MCF 10A (cell line): ENCODE measurements at regions of chr1 and their contacts with region 1.

Region 1: DNA sequence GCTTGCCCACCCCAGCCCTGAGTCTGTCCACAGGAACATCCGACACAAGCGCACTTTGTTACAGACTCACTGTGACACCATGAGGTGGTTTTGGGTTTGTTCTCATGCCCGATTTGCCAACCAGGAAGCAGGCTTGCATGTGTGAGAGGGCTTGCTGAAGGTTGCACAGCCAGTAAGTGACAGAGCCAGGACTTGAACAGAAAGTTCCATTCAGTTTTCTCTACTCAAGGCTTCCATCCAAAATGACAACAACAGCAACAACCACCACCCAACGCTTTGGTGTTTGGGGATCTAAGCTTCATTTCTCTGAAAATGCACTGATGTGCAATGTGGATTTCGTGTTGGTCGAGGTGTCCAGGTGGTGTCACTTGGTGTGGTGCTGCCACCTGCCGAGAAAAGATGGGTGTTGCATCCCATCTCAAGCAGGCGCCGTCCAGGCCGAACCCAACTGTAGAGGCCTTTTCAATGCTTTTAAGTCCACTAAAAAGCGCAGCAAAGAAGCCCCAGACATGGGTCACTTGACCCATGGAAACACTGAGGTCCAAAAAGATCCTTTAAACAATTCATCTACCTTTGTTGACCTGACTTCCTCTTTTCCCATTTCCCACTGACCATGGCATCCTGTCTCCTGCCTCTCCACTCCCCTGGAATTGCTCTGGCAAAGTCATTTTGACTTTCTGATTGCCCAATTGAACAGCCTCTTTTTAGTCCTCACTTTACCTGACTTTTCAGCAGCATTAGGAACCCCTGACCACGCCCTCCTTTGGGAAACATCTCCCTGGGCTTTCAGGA is 12.2 kb downstream of the CITED4 start:
- DNase-seq: peak; percentile 75
- H3K4me3 Mint-ChIP-seq: no peak overlapping the region
- H3K27ac Mint-ChIP-seq: no peak overlapping the region
- H3K4me1 Mint-ChIP-seq: peaks cover 6% of the 10 kb centered on the region
- H3K27me3 Mint-ChIP-seq: no peaks in the 10 kb centered on the region
- CTCF ChIP-seq: peak; percentile 84

Region 2: DNA sequence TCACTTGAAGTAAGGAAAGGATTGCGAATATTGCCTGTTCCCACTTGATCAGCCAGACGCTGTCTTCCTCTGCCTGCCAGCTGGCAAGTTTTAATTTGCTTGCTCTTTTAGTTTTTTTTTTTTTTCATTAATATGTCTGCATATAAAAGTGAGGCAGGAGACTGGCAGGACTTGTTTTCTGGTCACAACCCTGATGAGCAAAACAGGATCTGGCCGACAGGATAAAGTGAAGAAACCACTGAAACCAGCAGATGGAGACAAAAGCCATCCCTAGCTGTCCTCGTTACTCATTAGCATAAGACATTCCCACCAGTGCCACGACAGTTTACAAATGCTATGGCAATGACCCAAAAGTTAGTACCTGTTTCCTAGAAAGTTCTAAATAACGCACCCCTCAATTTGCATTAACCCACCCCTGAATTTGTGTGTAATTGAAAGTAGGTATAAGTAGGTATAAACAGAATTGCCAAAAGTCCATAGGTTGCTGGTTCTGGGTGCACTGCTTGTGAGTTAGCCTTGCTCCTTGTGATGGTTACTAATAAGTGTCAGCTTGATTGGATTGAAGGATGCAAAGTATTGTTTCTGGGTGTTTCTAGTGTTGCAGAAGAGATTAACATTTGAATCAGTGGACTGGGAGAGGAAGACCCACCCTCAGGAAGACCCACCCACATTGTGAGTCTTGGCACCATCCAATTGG is 257.7 kb before region 1 on chr1:
- CTCF ChIA-PET with region 1: interaction called, 6 read pairs
- POLR2A ChIA-PET with region 1: no interaction called
- intact Hi-C with region 1: loop called (anchors 1 kb)
- DNase-seq: peak; percentile 64
- H3K4me3 Mint-ChIP-seq: no peak overlapping the region
- H3K27ac Mint-ChIP-seq: no peak overlapping the region
- H3K4me1 Mint-ChIP-seq: peaks cover 5% of the 10 kb centered on the region
- H3K27me3 Mint-ChIP-seq: no peaks in the 10 kb centered on the region
- CTCF ChIP-seq: peak; percentile 41

Region 3: DNA sequence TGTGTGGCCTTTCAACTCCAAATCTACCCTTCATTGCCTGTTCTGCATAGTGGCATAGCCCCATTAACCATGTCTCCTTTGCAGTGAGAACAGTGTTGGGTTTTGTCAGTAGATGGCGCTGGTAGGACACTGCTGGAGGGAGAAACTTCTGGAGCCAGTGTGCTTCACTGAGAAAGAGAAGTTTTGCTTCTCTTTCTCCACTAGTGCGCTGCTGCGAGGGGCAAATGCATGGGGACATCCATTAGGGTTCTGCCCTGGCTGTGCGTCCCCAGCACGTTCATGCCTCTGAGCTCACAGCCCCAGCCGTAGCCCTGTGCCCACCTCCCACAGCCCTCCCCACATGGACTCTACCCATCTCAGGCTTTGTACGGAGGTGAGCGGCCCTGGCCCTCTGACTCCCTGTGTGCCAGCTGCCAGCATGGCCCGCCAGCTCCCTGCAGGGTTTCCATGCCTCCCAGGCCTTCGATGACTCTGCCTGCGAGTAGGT is 237.6 kb before region 1 on chr1:
- CTCF ChIA-PET with region 1: interaction called, 4 read pairs
- POLR2A ChIA-PET with region 1: no interaction called
- intact Hi-C with region 1: loop called (anchors 1 kb)
- DNase-seq: peak; percentile 78
- H3K4me3 Mint-ChIP-seq: no peak overlapping the region
- H3K27ac Mint-ChIP-seq: no peak overlapping the region
- H3K4me1 Mint-ChIP-seq: peaks cover 12% of the 10 kb centered on the region
- H3K27me3 Mint-ChIP-seq: no peaks in the 10 kb centered on the region
- CTCF ChIP-seq: peak; percentile 89

Region 4: GRCh38 chr1:40625066-40625465 is 224.9 kb before region 1 on chr1:
- CTCF ChIA-PET with region 1: no interaction called
- POLR2A ChIA-PET with region 1: no interaction called
- intact Hi-C with region 1: no loop called
- DNase-seq: peak; percentile 55
- H3K4me3 Mint-ChIP-seq: no peak overlapping the region
- H3K27ac Mint-ChIP-seq: no peak overlapping the region
- H3K4me1 Mint-ChIP-seq: peaks cover 9% of the 10 kb centered on the region
- H3K27me3 Mint-ChIP-seq: peaks cover 10% of the 10 kb centered on the region
- CTCF ChIP-seq: peak; percentile 32

Region 5: DNA sequence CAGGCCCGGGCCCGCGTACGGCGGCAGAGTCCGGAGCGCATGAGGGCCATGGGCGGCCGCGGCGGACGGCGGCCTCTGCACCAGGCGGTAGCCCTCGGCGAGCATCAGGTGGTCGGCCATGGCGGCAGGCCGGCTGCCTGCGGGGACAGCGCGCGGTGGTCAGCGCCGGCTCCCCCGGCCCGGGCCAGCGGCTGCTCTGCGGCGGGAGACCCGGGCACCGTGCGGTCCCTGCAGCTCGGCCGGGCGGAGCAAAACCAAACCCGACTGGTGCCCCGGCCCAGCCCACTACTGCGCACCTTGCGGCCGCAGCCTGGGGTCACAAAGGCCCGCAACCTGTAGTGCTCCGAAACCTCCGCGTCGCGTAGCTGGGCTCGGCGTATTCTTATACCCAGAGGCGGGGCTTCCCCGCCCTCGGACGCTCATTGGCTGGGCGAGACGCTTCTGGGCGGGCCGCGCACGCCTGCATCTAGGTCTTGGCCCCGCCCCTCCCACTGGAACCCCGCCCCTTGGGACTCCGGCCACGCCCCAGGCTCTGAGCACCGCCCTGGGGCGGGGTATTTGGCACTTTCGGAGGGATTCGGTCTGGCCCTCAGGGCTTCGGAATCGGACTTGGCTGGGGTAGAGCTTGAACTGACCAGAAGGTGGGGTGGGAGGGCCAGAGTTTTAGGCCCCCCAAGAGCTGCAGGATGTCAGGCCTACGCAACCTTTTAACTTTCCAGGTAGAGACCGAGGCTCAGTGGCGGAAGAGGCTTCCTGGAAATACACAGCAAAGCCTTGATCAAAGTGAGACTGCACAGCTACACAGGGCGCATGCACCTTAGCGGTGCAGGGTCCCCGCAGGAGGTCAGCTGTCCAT is 12.2 kb after region 1 on chr1 and contains the start of gene CITED4:
- CTCF ChIA-PET with region 1: interaction called, 48 read pairs
- POLR2A ChIA-PET with region 1: interaction called, 20 read pairs
- intact Hi-C with region 1: no loop called
- DNase-seq: peak; percentile 96
- H3K4me3 Mint-ChIP-seq: peak within 1 kb of the TSS; percentile 88
- H3K27ac Mint-ChIP-seq: peak within 1 kb of the TSS; percentile 88
- H3K4me1 Mint-ChIP-seq: peaks cover 30% of the 10 kb centered on the region
- H3K27me3 Mint-ChIP-seq: no peaks in the 10 kb centered on the region
- CTCF ChIP-seq: peak; percentile 25
- total RNA-seq, gene CITED4: 22.5 and 43.5 TPM in 2 replicates

Region 6: GRCh38 chr1:40980453-40981121 is 130.6 kb after region 1 on chr1:
- CTCF ChIA-PET with region 1: no interaction called
- POLR2A ChIA-PET with region 1: no interaction called
- intact Hi-C with region 1: no loop called
- DNase-seq: peak; percentile 41
- H3K4me3 Mint-ChIP-seq: peak overlapping the region; percentile 82
- H3K27ac Mint-ChIP-seq: peak overlapping the region; percentile 90
- H3K4me1 Mint-ChIP-seq: peaks cover 17% of the 10 kb centered on the region
- H3K27me3 Mint-ChIP-seq: no peaks in the 10 kb centered on the region
- CTCF ChIP-seq: no peak

Region 7: GRCh38 chr1:41003640-41004220 is 153.7 kb after region 1 on chr1:
- CTCF ChIA-PET with region 1: interaction called, 9 read pairs
- POLR2A ChIA-PET with region 1: no interaction called
- intact Hi-C with region 1: loop called (anchors 1 kb)
- DNase-seq: peak; percentile 98
- H3K4me3 Mint-ChIP-seq: no peak overlapping the region
- H3K27ac Mint-ChIP-seq: no peak overlapping the region
- H3K4me1 Mint-ChIP-seq: peaks cover 32% of the 10 kb centered on the region
- H3K27me3 Mint-ChIP-seq: no peaks in the 10 kb centered on the region
- CTCF ChIP-seq: peak; percentile 47